ENCODE measurements at regions of chr6 and their contacts with region 1.

Region 1: DNA sequence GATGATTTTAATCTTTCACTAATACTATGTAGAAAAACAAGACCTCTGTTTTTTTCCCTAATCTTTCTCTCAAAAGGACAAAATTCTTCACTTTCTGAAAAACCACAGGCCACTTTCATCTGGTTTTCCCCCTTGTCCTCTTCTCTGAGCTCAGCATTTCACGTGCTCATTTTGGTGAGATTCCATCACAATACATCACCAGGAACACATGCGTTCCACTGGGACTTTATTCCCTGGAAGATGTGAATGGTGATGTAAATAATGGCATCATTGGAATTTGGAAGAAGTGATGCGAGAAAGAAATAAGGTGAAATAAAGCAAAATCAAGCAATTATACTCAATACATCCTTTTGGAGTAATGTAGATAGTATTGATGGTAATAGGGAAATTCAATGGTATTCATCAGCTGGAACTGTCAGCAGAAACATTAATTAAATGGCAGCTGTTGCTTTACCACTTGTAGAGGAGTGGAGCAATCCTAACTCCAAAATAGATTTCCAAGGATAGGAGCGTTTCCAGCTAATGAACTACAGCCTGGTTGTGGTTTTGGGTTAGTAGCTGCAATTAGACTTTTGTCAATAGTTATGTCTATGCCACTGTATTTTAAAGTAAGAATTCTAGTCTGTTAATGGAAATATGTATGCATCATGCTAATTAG is 11.5 kb downstream of the FILIP1 start:
- DNase-seq: no peak
- ATAC-seq: peak in 3 of 4 donors; percentile 32 to 69 (median 57)
- H3K4me3 ChIP-seq: no peak overlapping the region
- H3K27ac ChIP-seq: peak overlapping the region; percentile 1 to 87 (median 64)
- H3K4me1 ChIP-seq: peaks cover 3 to 84% (median 68%) of the 10 kb centered on the region in 12 donors
- H3K27me3 ChIP-seq: no peaks in the 10 kb centered on the region
- CTCF ChIP-seq: no peak
- POLR2A ChIP-seq: no peak

Region 2: GRCh38 chr6:75424618-75425548 is 57.2 kb before region 1 on chr6:
- intact Hi-C with region 1: loop called in 2 of 10 experiments (anchors 5 kb)
- DNase-seq: no peak
- ATAC-seq: no peak
- H3K4me3 ChIP-seq: no peak overlapping the region
- H3K27ac ChIP-seq: peak overlapping the region in 2 of 12 donors; percentile 2 to 13
- H3K4me1 ChIP-seq: peaks cover 0 to 77% (median 36%) of the 10 kb centered on the region in 12 donors
- H3K27me3 ChIP-seq: no peaks in the 10 kb centered on the region
- CTCF ChIP-seq: no peak
- POLR2A ChIP-seq: no peak